PC-9 (cell line): ENCODE measurements at regions of chr5 and their contacts with region 1.

Region 1: DNA sequence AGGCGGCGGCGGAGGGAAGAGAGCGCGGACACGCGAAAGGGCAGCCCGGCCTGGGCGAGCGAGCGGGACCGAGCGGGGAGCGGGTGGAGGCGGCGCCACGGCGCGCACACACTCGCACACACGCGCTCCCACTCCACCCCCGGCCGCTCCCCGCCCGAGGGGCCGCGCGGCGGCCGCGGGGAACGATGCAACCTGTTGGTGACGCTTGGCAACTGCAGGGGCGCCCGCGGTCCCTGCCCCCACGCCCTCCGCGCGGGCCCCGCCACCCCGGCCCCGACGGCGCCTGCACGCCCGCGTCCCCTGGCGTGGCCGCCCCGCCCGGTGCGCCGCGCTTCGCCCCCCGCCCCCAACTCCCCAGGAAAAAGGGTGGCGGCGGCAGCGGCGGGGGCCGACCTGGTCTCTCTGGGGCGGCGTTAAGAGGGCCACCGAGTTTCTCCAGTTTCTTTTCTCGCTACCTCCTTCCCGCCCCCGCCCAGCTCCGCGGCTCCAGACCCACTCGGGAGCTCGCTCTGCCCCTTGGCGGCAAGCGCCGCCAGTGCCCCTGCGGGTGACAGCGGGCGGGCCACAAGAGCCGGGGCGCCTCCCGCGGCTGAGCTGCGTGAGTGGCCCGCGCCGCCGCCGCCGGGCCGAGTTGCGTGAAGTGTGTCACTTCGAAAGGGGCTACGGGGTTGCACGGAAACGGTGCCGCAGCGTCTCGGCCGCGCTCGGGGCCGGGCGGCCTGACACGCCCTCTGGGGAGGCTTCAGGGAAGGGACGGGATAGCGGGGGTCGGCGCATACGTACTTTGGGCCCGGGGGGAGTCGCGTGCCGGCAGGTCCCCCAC is at the start of gene NR3C1:
- DNase-seq: peak; percentile 60 to 85
- H3K4me3 ChIP-seq: peak within 1 kb of the TSS; percentile 96
- H3K27ac ChIP-seq: peak within 1 kb of the TSS; percentile 94
- H3K4me1 ChIP-seq: peaks cover 29% of the 10 kb centered on the region
- H3K27me3 ChIP-seq: no peaks in the 10 kb centered on the region
- CTCF ChIP-seq: peak; percentile 39; the same call in 1 of the 2 replicates
- total RNA-seq, gene NR3C1: 48.8 and 52.8 TPM in 2 replicates

Region 2: DNA sequence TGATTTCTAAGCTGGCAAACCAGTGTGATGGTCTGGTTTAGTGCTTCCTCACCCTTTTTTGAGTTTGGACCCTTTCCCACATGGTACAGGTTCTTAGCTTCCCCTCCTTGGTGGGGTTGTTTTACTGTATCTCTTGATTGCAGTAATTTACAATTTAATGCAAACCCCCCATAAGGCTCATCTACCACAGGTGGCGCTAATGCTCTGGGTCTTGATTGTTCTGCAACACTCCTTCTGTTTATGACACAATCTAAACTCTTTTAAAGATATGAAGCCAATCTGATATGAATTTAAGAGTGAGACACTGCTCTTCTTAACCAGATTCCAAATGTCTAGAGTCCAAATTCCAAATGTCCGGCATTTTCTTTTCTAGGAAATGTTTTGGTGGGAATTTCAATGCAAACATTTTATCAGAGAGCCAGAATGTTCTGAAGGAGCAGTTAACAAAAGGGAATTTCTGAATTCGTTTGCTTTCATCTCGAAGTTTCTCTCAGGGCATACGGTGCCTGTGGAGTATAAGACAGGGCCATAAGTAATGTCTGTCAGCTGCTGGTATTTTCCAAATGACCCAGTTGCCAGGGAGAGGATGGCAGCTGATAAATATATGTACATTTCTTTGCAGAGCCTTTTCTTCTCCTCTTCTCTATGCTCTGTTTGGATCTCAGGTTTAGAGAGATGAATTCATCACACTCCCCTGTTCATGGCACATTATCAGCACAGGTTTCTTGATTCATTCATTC is 386.9 kb before region 1 on chr5:
- CTCF ChIA-PET with region 1: no interaction called
- POLR2A ChIA-PET with region 1: no interaction called
- intact Hi-C with region 1: loop called (anchors 1 kb)
- DNase-seq: peak in 1 of 2 experiments; percentile 25
- H3K4me3 ChIP-seq: no peak overlapping the region
- H3K27ac ChIP-seq: no peak overlapping the region
- H3K4me1 ChIP-seq: no peaks in the 10 kb centered on the region
- H3K27me3 ChIP-seq: no peaks in the 10 kb centered on the region
- CTCF ChIP-seq: peak; percentile 62

Region 3: DNA sequence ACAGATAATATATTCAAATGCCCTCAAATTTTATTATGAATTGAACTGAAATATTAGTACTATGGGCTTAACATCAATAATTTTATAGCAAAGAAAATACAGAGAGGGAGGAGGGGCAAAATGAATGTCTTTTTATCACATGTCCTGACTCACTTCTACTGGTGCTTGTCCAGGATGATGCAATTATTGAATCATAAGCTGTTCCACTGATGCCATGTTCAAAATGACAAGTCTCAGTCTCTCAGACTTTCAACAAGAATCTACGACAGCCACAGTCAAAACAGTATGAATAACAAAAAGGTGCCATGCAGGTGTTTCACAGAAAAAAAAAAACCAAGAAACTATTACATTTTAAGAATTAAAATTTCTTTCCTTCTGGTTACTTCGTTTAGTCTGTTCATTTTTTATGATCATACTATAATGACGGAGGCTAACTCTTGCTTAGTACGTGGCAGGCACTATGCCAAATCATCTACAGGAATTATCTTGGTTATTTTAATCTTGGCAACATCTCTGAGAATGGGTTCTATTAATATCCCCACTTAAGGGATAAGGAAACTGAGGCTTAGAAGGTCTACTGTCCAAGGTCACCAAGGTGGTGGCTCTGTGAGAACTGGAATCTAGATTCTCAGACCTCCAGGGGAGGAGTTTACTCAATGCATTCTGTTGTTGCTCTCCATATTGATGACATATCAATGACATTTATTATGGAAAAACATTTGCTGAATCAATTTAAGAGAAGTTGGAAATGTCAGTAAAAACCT is 61.8 kb before region 1 on chr5:
- CTCF ChIA-PET with region 1: no interaction called
- POLR2A ChIA-PET with region 1: no interaction called
- intact Hi-C with region 1: no loop called
- DNase-seq: no peak
- H3K4me3 ChIP-seq: no peak overlapping the region
- H3K27ac ChIP-seq: peak overlapping the region; percentile 31; the same call in 1 of the 2 replicates
- H3K4me1 ChIP-seq: peaks cover 8% of the 10 kb centered on the region; the same call in 1 of the 2 replicates
- H3K27me3 ChIP-seq: no peaks in the 10 kb centered on the region
- CTCF ChIP-seq: no peak

Region 4: GRCh38 chr5:143495821-143496275 is 92.0 kb after region 1 on chr5:
- CTCF ChIA-PET with region 1: no interaction called
- POLR2A ChIA-PET with region 1: no interaction called
- intact Hi-C with region 1: loop called (anchors 5 kb)
- DNase-seq: peak in 1 of 2 experiments; percentile 58
- H3K4me3 ChIP-seq: no peak overlapping the region
- H3K27ac ChIP-seq: peak overlapping the region; percentile 77
- H3K4me1 ChIP-seq: peaks cover 34% of the 10 kb centered on the region
- H3K27me3 ChIP-seq: no peaks in the 10 kb centered on the region
- CTCF ChIP-seq: no peak

Region 5: DNA sequence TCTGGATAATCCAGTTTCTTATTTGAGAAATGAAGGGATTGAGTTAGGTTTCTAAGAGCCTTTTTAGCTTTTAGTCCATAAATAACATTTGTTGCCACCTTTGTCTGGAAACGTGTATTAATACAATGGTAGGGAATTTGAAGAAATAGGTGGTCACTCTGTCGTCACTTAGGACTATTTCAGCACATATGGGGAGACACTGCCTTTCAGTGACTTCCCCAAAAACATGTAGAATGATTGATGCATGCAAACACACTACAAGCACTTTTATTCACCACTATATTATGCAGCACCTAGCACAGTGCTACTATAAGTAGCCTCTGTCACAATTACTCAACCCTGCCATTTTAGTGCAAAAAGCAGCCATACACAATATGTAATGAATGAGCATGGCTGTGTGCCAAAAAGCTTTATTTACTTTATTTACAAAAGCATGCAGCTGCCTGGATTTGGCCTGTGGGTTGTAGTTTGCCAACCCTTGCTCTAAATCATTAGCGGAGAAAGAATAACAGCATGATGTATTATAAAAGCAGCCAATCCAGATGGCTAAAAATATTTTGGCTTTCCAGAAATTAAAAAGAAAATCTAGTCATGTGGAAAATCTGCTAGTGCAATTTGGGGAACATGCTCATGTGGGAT is 254.0 kb after region 1 on chr5:
- CTCF ChIA-PET with region 1: no interaction called
- POLR2A ChIA-PET with region 1: no interaction called
- intact Hi-C with region 1: loop called (anchors 1 kb)
- DNase-seq: peak; percentile 34 to 89
- H3K4me3 ChIP-seq: no peak overlapping the region
- H3K27ac ChIP-seq: no peak overlapping the region
- H3K4me1 ChIP-seq: peaks cover 63% of the 10 kb centered on the region
- H3K27me3 ChIP-seq: no peaks in the 10 kb centered on the region
- CTCF ChIP-seq: no peak

Region 6: DNA sequence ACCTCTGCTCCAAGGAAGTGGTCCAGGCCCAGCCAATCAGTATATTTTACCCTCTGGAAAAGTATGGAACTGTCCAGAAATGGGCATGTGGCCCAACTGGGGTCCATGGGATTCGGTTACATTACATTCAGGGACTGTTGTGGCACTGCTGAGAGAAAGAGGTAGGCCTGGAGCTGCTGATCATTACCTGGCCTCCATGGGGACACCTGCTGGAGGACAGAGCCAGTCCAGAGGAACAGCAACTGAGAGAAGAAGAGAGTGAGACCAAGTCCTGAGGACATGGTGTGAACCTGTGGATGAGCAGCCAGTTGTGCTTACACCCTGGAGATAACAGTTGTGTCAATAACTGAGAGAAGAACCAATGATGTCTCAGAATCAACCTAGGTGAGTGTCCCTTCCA is 456.4 kb after region 1 on chr5:
- CTCF ChIA-PET with region 1: no interaction called
- POLR2A ChIA-PET with region 1: no interaction called
- intact Hi-C with region 1: no loop called
- DNase-seq: no peak
- H3K4me3 ChIP-seq: no peak overlapping the region
- H3K27ac ChIP-seq: no peak overlapping the region
- H3K4me1 ChIP-seq: no peaks in the 10 kb centered on the region
- H3K27me3 ChIP-seq: no peaks in the 10 kb centered on the region
- CTCF ChIP-seq: no peak; the same call in 1 of the 2 replicates

Region 7: GRCh38 chr5:143874312-143874711 is 470.5 kb after region 1 on chr5:
- CTCF ChIA-PET with region 1: no interaction called
- POLR2A ChIA-PET with region 1: interaction called, 21 read pairs
- intact Hi-C with region 1: no loop called
- DNase-seq: peak in 1 of 2 experiments; percentile 49
- H3K4me3 ChIP-seq: no peak overlapping the region
- H3K27ac ChIP-seq: no peak overlapping the region
- H3K4me1 ChIP-seq: peaks cover 14% of the 10 kb centered on the region; the same call in 1 of the 2 replicates
- H3K27me3 ChIP-seq: no peaks in the 10 kb centered on the region
- CTCF ChIP-seq: no peak